ENCODE measurements at regions of chr19 and their contacts with region 1.

Region 1: DNA sequence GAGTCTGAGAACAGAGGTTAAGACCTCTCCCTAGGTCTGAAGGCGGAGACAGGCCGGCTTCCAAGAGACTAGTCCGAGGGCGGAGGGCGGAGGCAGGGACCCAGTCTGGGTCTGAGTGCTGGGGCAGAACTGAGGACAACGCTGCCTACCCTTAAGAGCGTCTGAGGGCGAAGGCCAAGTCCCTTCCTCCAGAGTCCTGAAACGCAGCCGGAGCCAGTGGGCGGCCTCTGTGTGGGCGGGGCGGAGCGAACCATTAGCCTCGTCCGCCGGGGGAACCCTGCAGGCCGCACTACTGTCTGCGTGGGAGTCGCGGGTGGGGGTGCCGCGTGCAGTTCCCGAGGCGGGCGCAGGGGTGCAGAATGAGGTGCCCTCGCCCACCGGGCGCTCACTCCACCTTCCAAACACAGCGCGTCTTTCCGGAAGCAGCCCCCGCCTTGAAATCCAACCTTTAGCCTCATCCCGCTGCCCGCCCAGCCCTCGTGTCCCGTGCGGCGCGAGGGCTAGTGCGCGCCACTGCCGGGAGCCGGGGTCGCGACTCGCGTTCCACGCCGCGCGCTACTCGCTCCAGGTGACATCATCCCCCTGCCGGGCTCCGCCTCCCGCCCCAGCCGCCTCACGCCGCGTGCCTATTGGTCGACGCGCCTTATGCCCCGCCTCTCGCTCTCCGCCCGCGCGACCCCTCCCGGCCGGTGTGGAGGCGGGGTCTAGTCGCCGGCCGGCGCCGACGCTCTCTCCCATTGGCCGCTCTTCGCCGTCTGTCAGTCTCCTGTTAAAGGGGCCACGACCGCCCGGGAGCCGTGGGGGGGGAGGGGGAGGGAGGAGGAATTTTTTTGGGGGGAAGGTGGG is at the start of gene C19orf73:
- DNase-seq: peak; percentile 94 to 98
- ATAC-seq: peak; percentile 65 to 87
- H3K4me3 ChIP-seq: peak within 1 kb of the TSS; percentile 62
- H3K27ac ChIP-seq: peak within 1 kb of the TSS; percentile 95
- H3K4me1 ChIP-seq: peaks cover 20% of the 10 kb centered on the region
- CTCF ChIP-seq: no peak
- EP300 ChIP-seq: no peak
- POLR2A ChIP-seq: peak; percentile 64
- RAD21 ChIP-seq: no peak
- polyA plus RNA-seq, gene C19orf73: 1.4 and 1.8 TPM in 2 replicates

Region 2: GRCh38 chr19:48933382-48933932 is 185.3 kb before region 1 on chr19 and contains the start of gene DHDH:
- CTCF ChIA-PET with region 1: no interaction called
- POLR2A ChIA-PET with region 1: no interaction called
- DNase-seq: peak; percentile 81 to 88
- ATAC-seq: peak; percentile 95 to 97
- H3K4me3 ChIP-seq: peak within 1 kb of the TSS; percentile 47
- H3K27ac ChIP-seq: peak within 1 kb of the TSS; percentile 55 to 79
- H3K4me1 ChIP-seq: peaks cover 6% of the 10 kb centered on the region; the same call in 2 of the 3 replicates
- CTCF ChIP-seq: no peak
- EP300 ChIP-seq: no peak
- POLR2A ChIP-seq: peak; percentile 61
- RAD21 ChIP-seq: no peak
- polyA plus RNA-seq, gene DHDH: 0.60 and 0.78 TPM in 2 replicates

Region 3: DNA sequence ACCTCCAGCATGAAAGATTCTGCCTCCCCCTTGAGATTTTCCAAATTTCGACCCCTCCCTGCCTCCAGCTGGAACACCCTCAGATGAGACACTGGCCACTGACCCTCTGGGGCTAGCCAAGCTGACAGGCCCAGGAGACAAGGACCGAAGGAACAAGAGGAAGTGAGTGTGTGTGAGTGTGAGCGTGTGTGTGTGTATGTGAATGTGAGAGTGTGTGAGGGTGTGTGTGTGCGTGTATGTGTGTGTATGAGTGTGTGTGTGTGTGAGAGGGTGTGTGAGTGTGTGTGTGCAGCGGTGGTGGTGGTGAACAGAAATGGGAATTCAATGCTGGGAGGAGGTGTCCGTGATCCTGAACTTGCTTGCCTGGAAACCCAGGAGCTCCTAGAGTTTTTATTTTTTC is 22.6 kb after region 1 on chr19:
- CTCF ChIA-PET with region 1: interaction called, 298 read pairs
- POLR2A ChIA-PET with region 1: no interaction called
- DNase-seq: no peak
- ATAC-seq: no peak
- H3K4me3 ChIP-seq: no peak overlapping the region
- H3K27ac ChIP-seq: no peak overlapping the region
- H3K4me1 ChIP-seq: peaks cover 10% of the 10 kb centered on the region
- CTCF ChIP-seq: no peak
- EP300 ChIP-seq: no peak
- POLR2A ChIP-seq: no peak
- RAD21 ChIP-seq: no peak

Region 4: GRCh38 chr19:49443366-49444099 is 324.7 kb after region 1 on chr19:
- CTCF ChIA-PET with region 1: no interaction called
- POLR2A ChIA-PET with region 1: no interaction called
- DNase-seq: peak; percentile 94 to 97
- ATAC-seq: peak; percentile 72 to 85
- H3K4me3 ChIP-seq: peak overlapping the region; percentile 79
- H3K27ac ChIP-seq: peak overlapping the region; percentile 85 to 89
- H3K4me1 ChIP-seq: peaks cover 19% of the 10 kb centered on the region
- CTCF ChIP-seq: peak; percentile 97
- EP300 ChIP-seq: no peak
- POLR2A ChIP-seq: peak; percentile 21; the same call in 1 of the 2 replicates
- RAD21 ChIP-seq: peak; percentile 64 to 82

Measured in A549 (cell line).